GM10248 (cell line): ENCODE measurements at regions of chr7 and their contacts with region 1.

Region 1: DNA sequence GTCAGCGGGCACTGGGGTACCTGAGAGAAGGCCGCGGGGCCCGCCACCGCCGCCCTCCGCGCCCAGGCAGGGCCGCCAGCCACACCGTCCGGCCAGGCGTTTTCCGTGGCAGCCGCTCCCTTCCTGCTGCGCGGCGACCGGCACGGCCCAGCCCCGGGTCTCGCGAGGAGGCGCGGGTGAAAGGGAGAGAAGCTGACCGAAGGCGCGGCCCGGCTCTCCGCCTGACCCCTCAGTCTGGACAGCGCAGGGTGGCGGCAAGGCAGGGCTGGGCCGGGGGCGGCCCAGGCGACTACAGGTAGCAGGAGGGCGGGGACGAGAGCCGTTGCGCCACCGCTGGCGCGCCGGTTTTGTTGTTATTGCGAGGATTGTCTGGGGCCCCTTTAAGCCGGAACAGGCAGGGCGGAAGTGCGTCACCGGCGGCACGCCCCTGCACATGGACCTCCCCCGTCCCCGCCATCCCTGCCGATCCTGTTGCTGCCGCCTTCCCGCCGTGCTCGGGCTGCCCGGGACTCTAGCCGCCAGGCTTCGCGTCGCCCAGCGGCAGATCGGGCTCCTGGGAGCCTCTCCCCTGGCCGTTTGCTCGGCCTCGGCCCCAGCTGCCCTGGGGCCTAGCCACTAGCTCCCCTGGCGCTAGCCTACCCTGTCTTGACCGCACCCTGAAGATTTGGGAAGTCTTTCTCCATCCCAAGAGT is at the start of gene HERPUD2:
- DNase-seq: peak; percentile 95
- CTCF ChIP-seq: peak; percentile 1

Region 2: GRCh38 chr7:35676211-35676610 is 18.7 kb before region 1 on chr7:
- CTCF ChIA-PET with region 1: interaction called, 6 read pairs
- POLR2A ChIA-PET with region 1: interaction called, 15 read pairs
- DNase-seq: no peak
- CTCF ChIP-seq: peak; percentile 3

Region 3: GRCh38 chr7:35707422-35707821 is 12.5 kb after region 1 on chr7:
- CTCF ChIA-PET with region 1: interaction called, 92 read pairs
- POLR2A ChIA-PET with region 1: interaction called, 4 read pairs
- DNase-seq: no peak
- CTCF ChIP-seq: no peak

Region 4: DNA sequence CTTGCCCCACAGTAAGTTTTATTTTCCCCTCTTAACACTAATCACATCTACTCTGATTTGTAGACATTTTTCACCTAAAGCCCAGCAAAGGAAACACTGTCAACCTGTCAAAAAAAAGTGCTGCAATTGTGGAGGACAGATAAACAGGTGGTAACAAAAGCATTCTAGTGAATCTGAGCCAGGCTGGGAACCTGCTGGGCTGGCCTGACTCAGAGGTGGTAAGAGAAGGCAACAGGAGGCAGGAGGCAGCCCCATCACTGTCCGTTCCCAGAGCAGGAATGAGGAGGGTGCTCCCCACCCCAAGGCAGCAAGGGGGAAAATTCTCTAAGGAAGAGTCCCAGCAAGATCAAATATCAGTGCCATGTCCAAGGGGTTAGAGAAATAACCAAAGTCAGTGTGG is 19.5 kb after region 1 on chr7:
- CTCF ChIA-PET with region 1: interaction called, 334 read pairs
- POLR2A ChIA-PET with region 1: interaction called, 4 read pairs
- DNase-seq: no peak
- CTCF ChIP-seq: no peak

Region 5: GRCh38 chr7:35729061-35729783 is 34.3 kb after region 1 on chr7:
- CTCF ChIA-PET with region 1: interaction called, 334 read pairs
- POLR2A ChIA-PET with region 1: interaction called, 3 read pairs
- DNase-seq: peak; percentile 67
- CTCF ChIP-seq: no peak